Astrocyte of the cerebellum (primary cell): ENCODE measurements at regions of chr7 and their contacts with region 1.

Region 1: GRCh38 chr7:99920149-99920548 is 819 bp upstream of the TRIM4 start:
- DNase-seq: no peak
- H3K4me3 ChIP-seq: peak overlapping the region; percentile 67
- CTCF ChIP-seq: no peak

Region 2: DNA sequence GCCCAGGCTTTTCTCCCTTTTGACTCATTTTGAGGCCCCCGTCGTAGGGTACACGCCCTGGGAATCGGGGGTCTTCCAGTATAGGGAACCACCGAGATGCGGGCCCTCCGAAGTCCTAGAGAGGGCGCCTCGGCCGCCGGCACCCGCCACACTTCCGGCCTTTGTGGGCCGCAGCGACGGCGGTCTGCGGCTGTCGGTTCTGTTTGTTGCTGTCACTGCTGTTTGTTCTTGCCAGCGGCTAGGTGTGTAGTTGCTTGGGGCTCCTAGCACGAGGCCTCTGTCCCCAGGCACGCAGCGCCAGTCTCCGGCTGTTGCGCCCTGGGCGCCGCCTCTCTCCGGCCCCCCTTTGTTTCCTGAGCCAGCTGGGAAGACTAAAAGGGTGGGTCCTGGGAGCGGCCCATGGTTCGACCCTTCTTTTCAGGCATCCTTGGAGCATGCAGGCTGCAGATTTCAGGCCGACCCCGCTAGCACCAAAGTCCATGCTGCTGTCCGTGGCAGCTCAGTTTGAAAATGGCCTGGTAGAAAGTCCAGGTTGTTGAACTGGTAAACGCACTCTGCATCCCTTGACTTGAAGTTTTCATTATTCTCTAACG is 77.5 kb after region 1 on chr7:
- in situ Hi-C with region 1: loop called (anchors 5 kb)
- DNase-seq: no peak
- H3K4me3 ChIP-seq: peak overlapping the region; percentile 27
- CTCF ChIP-seq: no peak